PC-9 (cell line): ENCODE measurements at regions of chr5 and their contacts with region 1.

Region 1: GRCh38 chr5:140302786-140303639 is at the start of gene PFDN1:
- DNase-seq: peak; percentile 89 to 90
- H3K4me3 ChIP-seq: peak within 1 kb of the TSS; percentile 95
- H3K27ac ChIP-seq: peak within 1 kb of the TSS; percentile 89
- H3K4me1 ChIP-seq: peaks cover 36% of the 10 kb centered on the region
- H3K27me3 ChIP-seq: no peaks in the 10 kb centered on the region
- CTCF ChIP-seq: no peak
- total RNA-seq, gene PFDN1: 62.7 and 69.1 TPM in 2 replicates

Region 2: GRCh38 chr5:140261403-140262171 is 41.4 kb before region 1 on chr5:
- CTCF ChIA-PET with region 1: no interaction called
- POLR2A ChIA-PET with region 1: no interaction called
- intact Hi-C with region 1: loop called (anchors 5 kb)
- DNase-seq: peak; percentile 77 to 95
- H3K4me3 ChIP-seq: peak overlapping the region; percentile 4; the same call in 1 of the 2 replicates
- H3K27ac ChIP-seq: peak overlapping the region; percentile 98
- H3K4me1 ChIP-seq: peaks cover 68% of the 10 kb centered on the region
- H3K27me3 ChIP-seq: no peaks in the 10 kb centered on the region
- CTCF ChIP-seq: no peak

Region 3: GRCh38 chr5:140322751-140323731 is 20.0 kb after region 1 on chr5:
- CTCF ChIA-PET with region 1: no interaction called
- POLR2A ChIA-PET with region 1: interaction called, 7 read pairs
- intact Hi-C with region 1: loop called (anchors 2 kb)
- DNase-seq: peak; percentile 80 to 95
- H3K4me3 ChIP-seq: peak overlapping the region; percentile 43; the same call in 1 of the 2 replicates
- H3K27ac ChIP-seq: peak overlapping the region; percentile 94
- H3K4me1 ChIP-seq: peaks cover 61% of the 10 kb centered on the region
- H3K27me3 ChIP-seq: no peaks in the 10 kb centered on the region
- CTCF ChIP-seq: no peak

Region 4: GRCh38 chr5:142221091-142221860 is 1918.3 kb after region 1 on chr5:
- CTCF ChIA-PET with region 1: interaction called, 10 read pairs
- POLR2A ChIA-PET with region 1: no interaction called
- intact Hi-C with region 1: no loop called
- DNase-seq: no peak
- H3K4me3 ChIP-seq: no peak overlapping the region
- H3K27ac ChIP-seq: no peak overlapping the region
- H3K4me1 ChIP-seq: peaks cover 53% of the 10 kb centered on the region
- H3K27me3 ChIP-seq: no peaks in the 10 kb centered on the region
- CTCF ChIP-seq: no peak